ENCODE measurements at regions of chr11 and their contacts with region 1.

Region 1: DNA sequence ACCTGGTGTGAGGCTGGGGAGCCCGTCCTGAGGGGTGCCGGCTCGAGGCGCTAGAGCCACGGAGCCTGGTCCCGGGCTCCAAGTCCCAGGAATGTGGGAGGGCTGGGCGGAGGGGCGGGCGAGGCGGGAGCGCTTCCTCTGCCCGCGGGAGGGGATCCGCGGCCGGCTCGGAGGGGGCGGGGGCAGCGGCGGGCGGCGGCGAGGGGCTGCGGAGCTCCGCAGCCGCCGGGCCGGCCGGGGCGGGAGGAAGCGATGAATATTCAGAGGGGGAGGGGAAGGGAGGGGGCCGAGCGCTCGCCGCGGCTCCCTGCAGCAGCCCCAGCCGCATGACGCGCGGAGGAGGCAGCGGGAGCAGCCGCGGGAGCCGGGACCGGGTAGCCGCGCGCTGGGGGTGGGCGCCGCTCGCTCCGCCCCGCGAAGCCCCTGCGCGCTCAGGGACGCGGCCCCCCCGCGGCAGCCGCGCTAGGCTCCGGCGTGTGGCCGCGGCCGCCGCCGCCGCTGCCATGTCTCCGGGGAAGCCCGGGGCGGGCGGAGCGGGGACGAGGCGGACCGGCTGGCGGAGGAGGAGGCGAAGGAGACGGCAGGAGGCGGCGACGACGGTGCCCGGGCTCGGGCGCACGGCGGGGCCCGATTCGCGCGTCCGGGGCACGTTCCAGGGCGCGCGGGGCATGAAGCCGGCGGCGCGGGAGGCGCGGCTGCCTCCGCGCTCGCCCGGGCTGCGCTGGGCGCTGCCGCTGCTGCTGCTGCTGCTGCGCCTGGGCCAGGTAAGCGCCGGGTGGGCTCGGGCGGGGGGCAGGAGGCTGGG is at the start of gene PTPRJ:
- DNase-seq: peak; percentile 75
- H3K4me3 ChIP-seq: peak within 1 kb of the TSS; percentile 66 to 94 (median 84)
- H3K27ac ChIP-seq: peak within 1 kb of the TSS; percentile 68 to 85 (median 74)
- H3K4me1 ChIP-seq: peaks cover 0 to 20% (median 15%) of the 10 kb centered on the region in 4 donors
- H3K27me3 ChIP-seq: no peaks in the 10 kb centered on the region
- CTCF ChIP-seq: no peak
- EP300 ChIP-seq: no peak
- POLR2A ChIP-seq: no peak
- total RNA-seq, gene PTPRJ: 7.9 to 12.2 (median 10.3) TPM

Region 2: DNA sequence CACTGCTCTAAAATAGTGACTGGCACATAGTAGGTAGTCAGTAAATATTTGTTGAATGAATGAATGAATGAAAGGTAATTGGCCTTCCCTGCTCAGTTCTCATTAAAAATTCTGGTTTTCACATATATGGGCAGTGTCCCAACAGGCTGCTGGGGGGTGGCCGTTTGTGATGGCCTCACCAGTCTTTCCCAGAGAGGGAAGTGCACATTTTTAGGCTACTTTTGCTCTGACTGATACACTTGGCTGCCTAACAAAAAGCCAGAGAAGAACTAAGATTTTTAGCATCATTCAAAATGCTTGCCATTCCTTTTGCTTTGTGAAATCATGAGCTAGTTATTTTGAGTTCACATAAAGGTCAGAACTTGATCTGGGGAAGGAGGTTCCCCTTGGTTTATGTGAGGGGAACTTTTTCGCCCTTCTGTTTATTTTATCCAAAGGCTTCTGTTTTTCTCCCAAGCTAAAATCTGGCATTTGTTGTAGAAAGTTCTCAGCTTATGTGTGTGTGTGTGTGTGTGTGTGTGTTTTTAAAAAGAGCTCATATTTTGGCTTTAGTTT is 83.1 kb after region 1 on chr11:
- intact Hi-C with region 1: loop called (anchors 10 kb)
- DNase-seq: peak; percentile 75
- H3K4me3 ChIP-seq: no peak overlapping the region
- H3K27ac ChIP-seq: peak overlapping the region; percentile 68 to 81 (median 73)
- H3K4me1 ChIP-seq: peaks cover 0 to 34% (median 21%) of the 10 kb centered on the region in 4 donors
- H3K27me3 ChIP-seq: no peaks in the 10 kb centered on the region
- CTCF ChIP-seq: no peak
- EP300 ChIP-seq: peak in 2 of 4 donors; percentile 13 to 46
- POLR2A ChIP-seq: no peak

Region 3: GRCh38 chr11:48109046-48109666 is 128.7 kb after region 1 on chr11:
- intact Hi-C with region 1: loop called (anchors 2 kb)
- DNase-seq: no peak
- H3K4me3 ChIP-seq: peak overlapping the region in 2 of 4 donors; percentile 4 to 34
- H3K27ac ChIP-seq: peak overlapping the region in 2 of 4 donors; percentile 33 to 40
- H3K4me1 ChIP-seq: peaks cover 0 to 24% (median 16%) of the 10 kb centered on the region in 4 donors
- H3K27me3 ChIP-seq: no peaks in the 10 kb centered on the region
- CTCF ChIP-seq: peak in 2 of 4 experiments; percentile 11 to 17
- EP300 ChIP-seq: no peak
- POLR2A ChIP-seq: no peak